Ovary (tissue), 10 donors: ENCODE measurements at regions of chr14 and their contacts with region 1.

Region 1: GRCh38 chr14:101394374-101394773 is 166.9 kb upstream of the DIO3 start:
- DNase-seq: no peak
- H3K4me3 ChIP-seq: no peak overlapping the region
- H3K27ac ChIP-seq: no peak overlapping the region
- H3K4me1 ChIP-seq: no peaks in the 10 kb centered on the region
- H3K27me3 ChIP-seq: no peaks in the 10 kb centered on the region
- CTCF ChIP-seq: no peak
- EP300 ChIP-seq: no peak
- POLR2A ChIP-seq: no peak

Region 2: DNA sequence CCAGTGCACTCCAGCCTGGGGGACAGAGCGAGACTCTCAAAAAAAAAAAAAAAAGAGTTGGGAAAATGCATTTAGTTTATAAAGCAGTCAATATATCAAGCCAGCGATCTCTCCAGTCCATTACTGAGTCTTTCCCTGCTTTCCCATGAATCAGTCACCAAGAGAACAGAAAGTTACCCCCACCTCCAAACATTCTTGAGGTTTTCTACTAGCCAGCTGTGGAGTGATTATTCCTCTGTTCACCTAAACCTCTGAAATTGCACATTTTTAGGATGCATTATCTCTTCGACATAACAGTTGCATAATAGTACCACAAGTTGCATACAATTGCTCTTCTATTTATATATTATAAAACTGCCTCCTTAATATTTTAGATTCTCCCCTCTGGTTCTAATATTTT is 32.1 kb after region 1 on chr14:
- intact Hi-C with region 1: loop called in 1 of 4 experiments (anchors 2 kb)
- DNase-seq: no peak
- H3K4me3 ChIP-seq: no peak overlapping the region
- H3K27ac ChIP-seq: no peak overlapping the region
- H3K4me1 ChIP-seq: no peaks in the 10 kb centered on the region
- H3K27me3 ChIP-seq: no peaks in the 10 kb centered on the region
- CTCF ChIP-seq: no peak
- EP300 ChIP-seq: no peak
- POLR2A ChIP-seq: no peak